CD4-positive, alpha-beta memory T cell (primary cell): ENCODE measurements at regions of chr10 and their contacts with region 1.

Region 1: DNA sequence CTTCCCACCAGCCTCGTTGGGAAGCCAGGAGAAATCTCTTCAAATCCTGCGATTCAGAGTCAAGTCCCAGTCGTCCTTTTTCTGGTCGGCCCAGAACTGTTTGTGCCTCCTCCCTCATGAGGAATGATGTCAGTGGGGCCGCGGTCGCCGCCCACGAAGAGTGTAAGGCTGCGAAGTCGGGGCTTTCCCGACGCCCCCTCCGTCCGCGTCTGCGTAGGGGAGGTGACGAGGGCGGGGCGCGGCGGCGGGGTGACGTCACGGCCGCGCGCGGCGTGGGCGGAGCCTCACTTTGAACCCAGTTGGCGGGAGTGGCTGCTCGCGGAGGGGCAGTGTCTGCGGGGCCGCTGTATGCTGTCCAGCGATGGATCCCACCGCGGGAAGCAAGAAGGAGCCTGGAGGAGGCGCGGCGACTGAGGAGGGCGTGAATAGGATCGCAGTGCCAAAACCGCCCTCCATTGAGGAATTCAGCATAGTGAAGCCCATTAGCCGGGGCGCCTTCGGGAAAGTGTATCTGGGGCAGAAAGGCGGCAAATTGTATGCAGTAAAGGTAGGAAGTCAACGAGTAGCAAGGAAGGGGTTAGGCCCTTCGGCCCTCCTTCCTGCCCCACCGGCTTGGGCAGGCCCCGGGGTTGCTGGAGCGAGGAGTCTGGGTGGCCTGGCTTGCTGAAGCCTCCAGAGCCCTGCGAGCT is at the start of gene MASTL:
- DNase-seq: peak; percentile 94 to 97 (median 96)
- H3K4me3 ChIP-seq: peak within 1 kb of the TSS; percentile 82 to 100
- H3K4me3 Mint-ChIP-seq: peak within 1 kb of the TSS; percentile 95 to 100 (median 98)
- H3K27ac ChIP-seq: peak within 1 kb of the TSS; percentile 100
- H3K27ac Mint-ChIP-seq: peak within 1 kb of the TSS; percentile 100
- H3K4me1 ChIP-seq: peaks cover 40% of the 10 kb centered on the region
- H3K4me1 Mint-ChIP-seq: peaks cover 25 to 67% (median 45%) of the 10 kb centered on the region in 4 donors
- H3K27me3 ChIP-seq: no peaks in the 10 kb centered on the region
- H3K27me3 Mint-ChIP-seq: no peaks in the 10 kb centered on the region
- total RNA-seq, gene MASTL: 7.0 to 7.9 TPM

Region 2: GRCh38 chr10:26080939-26081338 is 1074.3 kb before region 1 on chr10:
- CTCF ChIA-PET with region 1: no interaction called
- POLR2A ChIA-PET with region 1: no interaction called
- intact Hi-C with region 1: no loop called
- DNase-seq: no peak
- H3K4me3 ChIP-seq: no peak overlapping the region
- H3K4me3 Mint-ChIP-seq: no peak overlapping the region
- H3K27ac ChIP-seq: no peak overlapping the region
- H3K27ac Mint-ChIP-seq: no peak overlapping the region
- H3K4me1 ChIP-seq: no peaks in the 10 kb centered on the region
- H3K4me1 Mint-ChIP-seq: no peaks in the 10 kb centered on the region
- H3K27me3 ChIP-seq: no peaks in the 10 kb centered on the region
- H3K27me3 Mint-ChIP-seq: peaks cover under 1 to 4% of the 10 kb centered on the region in 2 donors

Region 3: GRCh38 chr10:26448706-26449435 is 706.3 kb before region 1 on chr10:
- CTCF ChIA-PET with region 1: no interaction called
- POLR2A ChIA-PET with region 1: no interaction called
- intact Hi-C with region 1: loop called (anchors 5 kb)
- DNase-seq: peak; percentile 87 to 91 (median 89)
- H3K4me3 ChIP-seq: peak overlapping the region; percentile 31 to 37
- H3K4me3 Mint-ChIP-seq: peak overlapping the region; percentile 76 to 89 (median 84)
- H3K27ac ChIP-seq: peak overlapping the region; percentile 68
- H3K27ac Mint-ChIP-seq: peak overlapping the region; percentile 92 to 99 (median 98)
- H3K4me1 ChIP-seq: peaks cover 95% of the 10 kb centered on the region
- H3K4me1 Mint-ChIP-seq: peaks cover 77 to 93% (median 85%) of the 10 kb centered on the region in 4 donors
- H3K27me3 ChIP-seq: no peaks in the 10 kb centered on the region
- H3K27me3 Mint-ChIP-seq: no peaks in the 10 kb centered on the region

Region 4: DNA sequence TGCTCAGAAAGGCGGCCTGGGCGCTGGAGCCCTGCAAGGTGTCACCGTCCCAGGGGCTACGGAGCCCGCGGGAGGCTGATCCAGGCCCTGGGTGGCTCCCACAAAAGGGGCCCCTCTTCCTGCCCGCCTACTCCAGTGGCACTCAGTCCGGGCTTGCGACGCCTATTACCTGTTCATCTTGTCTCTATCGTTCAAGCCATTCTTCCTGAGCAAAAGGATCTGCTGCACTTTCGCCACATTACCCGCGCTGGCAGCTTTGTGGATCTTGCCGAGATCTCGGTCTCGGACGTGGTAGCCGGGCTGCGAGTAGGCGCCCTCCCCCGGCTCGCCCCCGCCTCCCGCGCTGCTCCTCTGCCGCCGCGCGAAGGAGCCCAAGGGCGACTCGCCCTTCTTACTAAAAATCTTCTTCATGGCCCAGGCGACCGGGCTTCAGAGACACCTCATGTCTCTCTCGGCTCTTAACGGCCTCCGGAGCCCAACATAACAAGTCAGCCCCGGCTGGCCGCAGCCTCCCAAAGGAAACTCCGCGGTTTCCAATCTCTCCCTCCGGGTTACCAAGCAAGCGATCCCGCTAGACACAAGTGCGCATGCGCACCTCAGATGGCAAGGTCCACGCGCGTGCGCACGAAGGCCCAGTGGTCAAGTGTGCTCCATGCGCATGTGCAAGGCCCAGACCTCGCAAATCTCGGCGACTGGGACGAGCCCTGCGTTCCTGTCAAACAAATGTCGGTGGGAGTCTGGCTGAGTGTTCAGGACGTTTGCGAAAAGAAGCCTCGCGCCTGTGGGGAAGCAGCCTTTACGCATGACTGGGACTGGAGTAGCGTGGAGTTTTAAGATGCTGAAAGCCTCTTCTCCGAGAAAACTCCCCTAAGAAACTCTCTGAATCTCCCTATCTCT is 55.0 kb before region 1 on chr10 and contains the start of gene ANKRD26:
- CTCF ChIA-PET with region 1: interaction called, 10 read pairs
- POLR2A ChIA-PET with region 1: interaction called, 28 read pairs
- intact Hi-C with region 1: loop called (anchors 1 kb)
- DNase-seq: peak; percentile 95 to 96 (median 95)
- H3K4me3 ChIP-seq: peak within 1 kb of the TSS; percentile 58 to 67
- H3K4me3 Mint-ChIP-seq: peak within 1 kb of the TSS; percentile 92 to 99 (median 96)
- H3K27ac ChIP-seq: peak within 1 kb of the TSS; percentile 76
- H3K27ac Mint-ChIP-seq: peak within 1 kb of the TSS; percentile 94 to 99 (median 98)
- H3K4me1 ChIP-seq: peaks cover 33% of the 10 kb centered on the region
- H3K4me1 Mint-ChIP-seq: peaks cover 21 to 49% (median 37%) of the 10 kb centered on the region in 4 donors
- H3K27me3 ChIP-seq: no peaks in the 10 kb centered on the region
- H3K27me3 Mint-ChIP-seq: no peaks in the 10 kb centered on the region
- total RNA-seq, gene ANKRD26: 10.7 to 11.6 TPM

Region 5: GRCh38 chr10:27241652-27242472 is 86.7 kb after region 1 on chr10:
- CTCF ChIA-PET with region 1: interaction called, 9 read pairs
- POLR2A ChIA-PET with region 1: interaction called, 126 read pairs
- intact Hi-C with region 1: loop called (anchors 1 kb)
- DNase-seq: peak; percentile 85 to 88 (median 87)
- H3K4me3 ChIP-seq: peak overlapping the region; percentile 66 to 94
- H3K4me3 Mint-ChIP-seq: peak overlapping the region; percentile 95 to 99 (median 99)
- H3K27ac ChIP-seq: peak overlapping the region; percentile 89
- H3K27ac Mint-ChIP-seq: peak overlapping the region; percentile 98 to 100 (median 99)
- H3K4me1 ChIP-seq: peaks cover 36% of the 10 kb centered on the region
- H3K4me1 Mint-ChIP-seq: peaks cover 20 to 54% (median 31%) of the 10 kb centered on the region in 4 donors
- H3K27me3 ChIP-seq: no peaks in the 10 kb centered on the region
- H3K27me3 Mint-ChIP-seq: peaks cover 0 to 3% of the 10 kb centered on the region in 2 donors

Region 6: GRCh38 chr10:27258838-27259812 is 103.9 kb after region 1 on chr10:
- CTCF ChIA-PET with region 1: interaction called, 5 read pairs
- POLR2A ChIA-PET with region 1: interaction called, 11 read pairs
- intact Hi-C with region 1: no loop called
- DNase-seq: peak in 2 of 5 donors; percentile 11 to 23
- H3K4me3 ChIP-seq: peak overlapping the region; percentile 17 to 55
- H3K4me3 Mint-ChIP-seq: peak overlapping the region; percentile 83 to 98 (median 93)
- H3K27ac ChIP-seq: no peak overlapping the region
- H3K27ac Mint-ChIP-seq: peak overlapping the region; percentile 17 to 90 (median 63)
- H3K4me1 ChIP-seq: peaks cover 21% of the 10 kb centered on the region
- H3K4me1 Mint-ChIP-seq: peaks cover 19 to 29% (median 23%) of the 10 kb centered on the region in 4 donors
- H3K27me3 ChIP-seq: peaks cover 28% of the 10 kb centered on the region
- H3K27me3 Mint-ChIP-seq: peaks cover 22 to 28% of the 10 kb centered on the region in 2 donors

Region 7: DNA sequence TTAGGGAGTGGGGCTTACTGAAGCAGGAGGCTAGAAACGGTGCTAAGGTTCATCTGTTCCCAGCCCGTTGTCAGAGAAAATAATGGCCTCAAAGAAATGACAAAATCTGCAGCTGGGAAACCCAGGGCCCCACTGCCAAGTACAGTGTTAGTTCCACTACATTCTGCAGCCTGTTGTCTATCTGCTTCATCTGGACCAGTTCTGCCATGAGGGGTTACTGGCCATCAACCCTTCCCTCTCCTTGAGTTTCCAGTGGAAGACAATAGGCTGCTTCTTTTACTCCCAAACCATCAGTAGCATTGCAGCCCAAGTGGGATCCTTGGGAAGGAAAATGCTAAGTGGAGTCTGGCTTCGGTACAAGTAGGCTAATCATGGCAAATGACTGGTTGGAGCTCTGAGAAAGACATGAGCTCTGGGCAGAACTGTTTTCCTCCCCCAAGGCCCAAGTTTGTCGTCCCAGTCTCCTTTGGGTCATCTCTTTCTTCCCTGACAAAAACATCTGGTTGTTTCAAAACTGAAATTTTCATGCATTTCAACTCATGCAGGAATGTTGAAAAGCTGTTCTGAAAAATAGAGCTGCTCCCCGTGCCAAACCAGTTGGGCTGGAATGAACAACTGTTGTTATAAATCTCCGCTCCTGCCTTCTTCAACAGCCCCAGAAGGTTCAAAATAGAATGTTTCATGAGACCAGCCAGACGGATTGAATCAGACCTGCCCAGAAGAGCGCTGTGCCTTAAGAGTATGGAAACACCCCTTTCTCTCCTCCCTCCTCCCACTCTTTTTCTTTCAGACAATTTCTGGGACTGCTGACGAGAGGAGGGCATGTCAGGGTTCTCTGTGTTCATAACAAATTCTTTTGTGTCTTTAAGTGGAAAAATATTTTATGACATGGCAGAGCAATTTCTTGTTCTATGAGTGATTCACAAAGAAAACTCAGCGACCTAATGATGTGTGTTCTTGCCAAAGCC is 465.5 kb after region 1 on chr10:
- CTCF ChIA-PET with region 1: no interaction called
- POLR2A ChIA-PET with region 1: no interaction called
- intact Hi-C with region 1: no loop called
- DNase-seq: no peak
- H3K4me3 ChIP-seq: no peak overlapping the region
- H3K4me3 Mint-ChIP-seq: no peak overlapping the region
- H3K27ac ChIP-seq: no peak overlapping the region
- H3K27ac Mint-ChIP-seq: no peak overlapping the region
- H3K4me1 ChIP-seq: no peaks in the 10 kb centered on the region
- H3K4me1 Mint-ChIP-seq: no peaks in the 10 kb centered on the region
- H3K27me3 ChIP-seq: no peaks in the 10 kb centered on the region
- H3K27me3 Mint-ChIP-seq: peaks cover 4 to 22% of the 10 kb centered on the region in 2 donors